Left cardiac atrium (tissue), 4 donors: ENCODE measurements at regions of chr4 and their contacts with region 1.

Region 1: GRCh38 chr4:102420569-102421221 is 75.4 kb upstream of the SLC39A8 start:
- DNase-seq: no peak
- ATAC-seq: no peak

Region 2: GRCh38 chr4:102263011-102263787 is 157.5 kb before region 1 on chr4:
- intact Hi-C with region 1: loop called in 1 of 2 experiments (anchors 10 kb)
- DNase-seq: no peak
- ATAC-seq: peak in 1 of 2 donors; percentile 15

Region 3: DNA sequence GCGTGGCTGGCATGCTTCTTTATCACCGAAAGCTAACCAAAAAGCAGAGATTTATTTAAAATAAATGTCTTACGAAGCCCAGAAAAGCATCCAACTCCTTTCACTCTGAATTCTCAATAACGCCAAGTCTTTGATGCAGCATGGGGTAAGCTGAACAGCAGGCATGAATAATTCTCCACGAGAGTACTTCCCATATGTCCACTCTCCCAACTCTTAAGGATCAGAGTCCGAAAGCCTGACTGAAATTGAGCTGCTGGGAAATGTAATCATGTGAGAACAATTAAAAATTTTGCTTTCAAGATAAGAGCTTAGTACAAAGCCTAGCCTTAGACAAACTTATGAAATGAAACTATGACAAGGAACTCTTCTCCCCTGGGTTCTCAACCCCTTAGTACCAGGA is 67.9 kb before region 1 on chr4:
- intact Hi-C with region 1: loop called in 1 of 2 experiments (anchors 10 kb)
- DNase-seq: no peak
- ATAC-seq: no peak

Region 4: DNA sequence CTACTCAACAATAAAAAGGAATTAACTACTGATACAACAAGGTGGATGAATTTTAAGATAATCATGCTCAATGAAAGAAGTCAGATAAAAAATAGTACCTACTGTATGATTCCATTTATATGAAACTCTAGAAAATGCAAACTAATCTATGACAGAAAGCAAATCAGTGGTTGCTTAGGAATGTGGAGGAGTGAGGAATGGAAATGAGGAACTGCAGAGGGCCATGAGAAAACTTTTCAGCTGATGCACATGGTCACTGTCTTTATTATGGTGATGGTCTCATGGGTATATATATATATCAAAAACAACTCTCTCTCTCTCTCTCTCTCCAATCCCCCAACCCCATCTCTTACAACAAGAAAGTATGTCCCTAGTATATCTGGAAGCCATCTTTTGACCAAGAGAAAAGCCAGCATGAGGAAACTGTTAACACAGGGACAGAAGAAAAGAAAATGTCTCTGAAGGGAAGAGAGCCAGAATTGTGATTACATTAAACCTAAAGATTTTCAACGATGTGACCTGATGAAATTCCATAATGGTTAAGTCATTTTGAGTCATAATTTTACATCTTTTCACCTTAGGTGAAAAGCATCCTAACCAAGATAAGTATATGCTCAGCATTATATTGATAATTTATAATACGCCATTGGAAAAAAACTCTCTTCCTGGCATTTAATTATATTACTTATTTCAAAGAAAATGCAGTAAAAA is 72.0 kb after region 1 on chr4:
- intact Hi-C with region 1: no loop called
- DNase-seq: no peak
- ATAC-seq: no peak

Region 5: GRCh38 chr4:102554482-102554881 is 133.8 kb after region 1 on chr4:
- intact Hi-C with region 1: no loop called
- DNase-seq: peak; percentile 54
- ATAC-seq: peak; percentile 72 to 96